Spleen (tissue), 13 donors: ENCODE measurements at regions of chr3 and their contacts with region 1.

Region 1: DNA sequence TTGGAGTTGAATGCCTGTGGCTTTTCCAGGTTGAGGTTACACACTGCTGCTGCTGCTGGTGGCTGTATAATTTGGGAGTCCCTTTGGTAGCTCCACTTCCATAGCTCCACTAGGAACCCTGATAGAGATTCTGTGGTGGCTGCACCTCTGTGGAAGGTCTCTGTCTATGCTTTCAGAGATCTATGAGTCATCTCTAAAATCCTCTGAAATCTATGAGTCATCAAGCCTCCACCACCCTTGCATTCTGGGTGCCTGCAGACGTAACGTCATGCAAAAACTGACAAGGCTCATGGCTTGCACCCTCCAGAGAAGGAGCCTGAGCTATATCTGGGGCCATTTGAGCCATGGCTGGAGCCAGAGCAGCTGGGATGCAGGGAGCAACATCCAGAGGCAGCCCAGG is 1037.0 kb upstream of the CFAP20DC start:
- DNase-seq: no peak
- H3K4me3 ChIP-seq: no peak overlapping the region
- H3K27ac ChIP-seq: no peak overlapping the region
- H3K4me1 ChIP-seq: peaks cover 0 to 8% (median under 1%) of the 10 kb centered on the region in 6 donors
- H3K27me3 ChIP-seq: no peaks in the 10 kb centered on the region
- CTCF ChIP-seq: no peak
- POLR2A ChIP-seq: no peak

Region 2: GRCh38 chr3:59759298-59760031 is 327.3 kb before region 1 on chr3:
- intact Hi-C with region 1: loop called (anchors 5 kb)
- DNase-seq: no peak
- H3K4me3 ChIP-seq: no peak overlapping the region
- H3K27ac ChIP-seq: no peak overlapping the region
- H3K4me1 ChIP-seq: no peaks in the 10 kb centered on the region
- H3K27me3 ChIP-seq: no peaks in the 10 kb centered on the region
- CTCF ChIP-seq: no peak
- POLR2A ChIP-seq: no peak

Region 3: GRCh38 chr3:60192297-60193114 is 105.7 kb after region 1 on chr3:
- intact Hi-C with region 1: no loop called
- DNase-seq: no peak
- H3K4me3 ChIP-seq: no peak overlapping the region
- H3K27ac ChIP-seq: no peak overlapping the region
- H3K4me1 ChIP-seq: no peaks in the 10 kb centered on the region
- H3K27me3 ChIP-seq: no peaks in the 10 kb centered on the region
- CTCF ChIP-seq: no peak
- POLR2A ChIP-seq: no peak